PC-3 (cell line): ENCODE measurements at regions of chr7 and their contacts with region 1.

Region 1: DNA sequence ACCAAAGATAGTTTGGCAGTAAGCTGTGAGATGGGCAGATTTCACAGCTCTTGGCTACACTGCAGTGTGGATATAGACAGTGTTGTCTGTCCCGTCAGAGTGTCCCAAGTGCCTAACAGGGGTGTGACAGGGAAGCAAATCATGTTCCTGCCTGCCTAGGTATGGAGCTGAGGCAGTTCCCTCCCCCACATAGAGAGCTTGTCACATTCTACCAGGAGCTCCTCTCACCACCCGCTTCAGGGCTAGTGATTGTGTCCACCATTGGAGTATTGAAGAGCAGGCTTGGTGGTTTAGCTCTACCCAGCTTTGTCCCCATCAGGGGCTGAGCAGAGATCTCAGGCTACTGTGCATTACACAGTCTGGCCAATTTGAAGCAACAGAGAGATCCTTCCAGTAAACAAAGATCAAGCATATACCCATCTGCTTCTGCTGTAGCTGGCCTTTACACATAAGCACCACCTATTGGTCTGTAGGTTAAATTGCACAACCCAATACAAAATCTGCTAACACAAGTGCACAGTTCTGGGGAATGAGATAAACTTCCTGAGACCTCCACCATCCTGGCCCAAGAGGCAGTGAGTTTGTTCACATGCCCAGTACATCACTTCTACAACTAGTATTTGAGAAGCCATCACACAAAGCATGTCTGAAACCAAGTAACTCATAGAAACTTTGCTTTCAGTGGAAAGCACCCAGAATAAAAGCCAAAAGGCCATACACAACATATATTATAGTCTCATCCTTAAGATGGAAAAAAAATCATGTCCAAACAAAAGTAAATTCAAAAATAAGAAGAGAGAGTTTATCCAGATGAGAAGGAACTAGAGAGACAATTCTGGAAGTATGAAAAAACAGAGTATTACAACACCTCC is 67.3 kb downstream of the GLCCI1 start:
- DNase-seq: peak; percentile 41
- ATAC-seq: peak; percentile 95
- H3K4me3 ChIP-seq: no peak overlapping the region
- H3K27ac ChIP-seq: no peak overlapping the region
- H3K4me1 ChIP-seq: 0 out of 2 replicates have a peak, but pooled peaks cover 8% of the 10 kb centered on the region
- H3K27me3 ChIP-seq: no peaks in the 10 kb centered on the region
- CTCF ChIP-seq: peak; percentile 74

Region 2: DNA sequence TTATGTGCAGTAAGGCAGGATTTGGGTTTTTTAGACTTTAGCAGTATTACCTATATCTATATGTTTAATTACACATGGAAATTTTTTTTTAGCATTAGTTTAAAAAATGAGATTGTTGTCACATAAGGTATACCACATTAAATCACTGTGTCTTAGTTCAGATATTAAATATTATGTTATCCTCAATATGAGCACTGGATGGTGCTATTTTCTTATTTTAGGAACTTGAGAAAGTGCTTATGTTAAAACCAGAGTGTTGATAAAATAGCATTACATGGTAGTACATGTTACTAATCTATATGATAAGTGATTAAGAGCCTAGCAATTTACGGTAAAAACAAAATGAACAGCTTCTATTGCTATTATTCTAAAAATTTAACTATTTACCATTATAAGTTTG is 440.4 kb before region 1 on chr7:
- CTCF ChIA-PET with region 1: no interaction called
- POLR2A ChIA-PET with region 1: no interaction called
- intact Hi-C with region 1: loop called (anchors 10 kb)
- DNase-seq: peak; percentile 62
- ATAC-seq: peak; percentile 61
- H3K4me3 ChIP-seq: no peak overlapping the region
- H3K27ac ChIP-seq: no peak overlapping the region
- H3K4me1 ChIP-seq: no peaks in the 10 kb centered on the region
- H3K27me3 ChIP-seq: no peaks in the 10 kb centered on the region
- CTCF ChIP-seq: peak; percentile 63

Region 3: GRCh38 chr7:7976677-7977076 is 59.2 kb before region 1 on chr7:
- CTCF ChIA-PET with region 1: no interaction called
- POLR2A ChIA-PET with region 1: no interaction called
- intact Hi-C with region 1: no loop called
- DNase-seq: no peak
- ATAC-seq: no peak
- H3K4me3 ChIP-seq: no peak overlapping the region
- H3K27ac ChIP-seq: no peak overlapping the region
- H3K4me1 ChIP-seq: peaks cover 17% of the 10 kb centered on the region
- H3K27me3 ChIP-seq: no peaks in the 10 kb centered on the region
- CTCF ChIP-seq: no peak